Activated CD8-positive, alpha-beta T cell treated with anti-CD3 and anti-CD28 coated beads, Interleukin-2, amount 10 ng/mL, durations not matched to agents 7 days and 5 days (primary cell): ENCODE measurements at regions of chr2 and their contacts with region 1.

Region 1: DNA sequence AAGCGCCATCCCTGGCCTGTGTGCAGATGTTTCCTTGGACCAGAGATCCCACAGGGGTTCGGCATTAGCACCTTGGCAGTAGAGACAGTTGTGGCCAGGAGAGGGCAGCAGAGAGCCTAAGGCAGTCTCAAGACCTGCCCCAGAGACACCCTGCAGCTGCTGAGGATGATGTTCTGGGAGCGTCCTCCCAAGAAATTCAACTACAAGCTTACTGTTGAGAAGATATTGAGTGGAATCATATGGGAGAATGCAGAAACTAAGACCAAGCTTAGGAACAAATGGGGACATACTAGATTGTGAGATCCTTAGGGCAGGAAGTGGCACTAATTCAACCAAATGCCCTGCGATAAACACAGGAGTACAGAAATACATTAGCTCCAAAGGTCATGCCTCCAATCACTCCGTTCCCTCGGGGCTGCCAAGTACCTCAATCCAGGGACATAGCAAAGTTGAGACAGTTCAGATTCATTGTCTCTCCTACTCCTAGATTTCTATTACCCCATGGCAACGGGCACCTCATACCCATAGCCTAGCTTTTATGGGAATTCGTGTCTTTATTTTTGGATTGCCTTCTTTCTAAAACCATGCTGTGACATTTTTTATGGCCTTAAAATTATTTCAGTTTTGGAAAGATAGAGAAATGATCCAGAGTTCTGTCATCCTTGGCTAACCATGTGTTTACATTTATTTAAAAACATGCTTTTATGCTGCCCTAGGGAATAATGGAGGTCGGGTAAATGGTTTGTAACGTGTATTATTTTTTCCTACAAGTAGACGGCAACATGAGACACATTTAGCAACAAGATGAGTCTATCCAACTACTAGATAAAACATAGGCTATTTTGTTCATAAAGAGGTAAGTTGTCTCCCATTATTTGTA is 2.2 kb upstream of the ERMN start:
- DNase-seq: peak; percentile 91
- ATAC-seq: peak; percentile 96
- H3K4me3 Mint-ChIP-seq: peak overlapping the region; percentile 27
- H3K27ac Mint-ChIP-seq: peak overlapping the region; percentile 56
- H3K4me1 Mint-ChIP-seq: peaks cover 41% of the 10 kb centered on the region
- H3K27me3 Mint-ChIP-seq: no peaks in the 10 kb centered on the region

Region 2: GRCh38 chr2:157311706-157312105 is 16.2 kb before region 1 on chr2:
- CTCF ChIA-PET with region 1: interaction called, 442 read pairs
- POLR2A ChIA-PET with region 1: no interaction called
- DNase-seq: no peak
- ATAC-seq: no peak
- H3K4me3 Mint-ChIP-seq: no peak overlapping the region
- H3K27ac Mint-ChIP-seq: no peak overlapping the region
- H3K4me1 Mint-ChIP-seq: peaks cover 9% of the 10 kb centered on the region
- H3K27me3 Mint-ChIP-seq: peaks cover 2% of the 10 kb centered on the region

Region 3: DNA sequence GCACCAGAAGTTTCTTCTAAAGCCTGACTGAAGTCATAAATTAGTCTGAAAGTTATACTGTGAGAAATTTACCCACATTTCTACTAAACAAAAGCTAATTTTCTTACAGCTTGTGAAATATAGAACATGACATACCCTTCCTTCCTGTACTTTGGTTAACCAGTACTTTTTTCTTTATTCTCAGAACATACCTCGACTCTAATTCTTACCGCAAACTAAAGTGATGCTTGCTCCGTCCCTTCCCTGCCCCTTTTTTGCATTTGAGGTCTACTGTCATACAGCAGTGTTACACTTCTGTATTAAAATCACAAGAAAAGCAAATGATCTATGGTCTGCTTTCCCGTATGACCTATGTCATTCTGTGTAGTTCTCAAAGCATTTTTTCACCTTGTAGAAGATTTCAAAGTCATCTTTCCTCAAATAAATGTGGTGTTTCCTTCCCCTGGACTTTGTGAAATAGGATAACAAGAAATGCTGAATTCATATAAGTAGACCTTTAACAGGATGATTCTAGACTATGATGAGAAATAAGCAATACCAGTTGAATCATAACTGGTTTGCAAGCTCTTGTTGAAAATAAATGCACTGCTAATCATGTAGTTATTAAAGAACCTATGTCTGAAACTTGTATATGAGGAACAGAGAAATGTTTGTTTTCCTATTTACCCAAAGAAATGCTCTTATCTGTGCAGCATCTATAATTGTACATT is 85.6 kb after region 1 on chr2:
- CTCF ChIA-PET with region 1: interaction called, 66 read pairs
- POLR2A ChIA-PET with region 1: interaction called, 9 read pairs
- DNase-seq: peak; percentile 79
- ATAC-seq: peak; percentile 84
- H3K4me3 Mint-ChIP-seq: peak overlapping the region; percentile 60
- H3K27ac Mint-ChIP-seq: peak overlapping the region; percentile 86
- H3K4me1 Mint-ChIP-seq: peaks cover 83% of the 10 kb centered on the region
- H3K27me3 Mint-ChIP-seq: no peaks in the 10 kb centered on the region

Region 4: DNA sequence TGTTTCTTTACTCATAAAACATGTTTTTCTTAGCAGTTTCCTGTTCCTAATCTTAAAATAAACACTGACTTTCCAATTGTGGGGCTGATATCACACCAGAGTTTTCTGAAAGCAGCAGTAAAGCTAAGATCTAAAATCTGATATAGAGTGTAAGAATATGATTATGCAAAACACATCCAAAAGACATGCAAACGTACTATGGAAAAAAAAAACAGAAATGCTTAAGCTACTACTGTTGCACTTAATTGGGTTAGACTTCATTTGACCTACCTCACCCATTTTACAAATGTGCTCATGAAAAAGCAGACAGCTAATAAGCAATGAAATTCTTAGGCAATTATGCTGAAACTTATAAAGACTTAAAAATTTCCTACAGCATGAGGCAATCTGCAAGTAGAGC is 105.5 kb after region 1 on chr2:
- CTCF ChIA-PET with region 1: interaction called, 73 read pairs
- POLR2A ChIA-PET with region 1: interaction called, 12 read pairs
- DNase-seq: no peak
- ATAC-seq: peak; percentile 15
- H3K4me3 Mint-ChIP-seq: peak overlapping the region; percentile 94
- H3K27ac Mint-ChIP-seq: peak overlapping the region; percentile 86
- H3K4me1 Mint-ChIP-seq: peaks cover 77% of the 10 kb centered on the region
- H3K27me3 Mint-ChIP-seq: no peaks in the 10 kb centered on the region

Region 5: GRCh38 chr2:157468931-157469708 is 141.3 kb after region 1 on chr2:
- CTCF ChIA-PET with region 1: interaction called, 15 read pairs
- POLR2A ChIA-PET with region 1: interaction called, 3 read pairs
- DNase-seq: no peak
- ATAC-seq: peak; percentile 76
- H3K4me3 Mint-ChIP-seq: peak overlapping the region; percentile 72
- H3K27ac Mint-ChIP-seq: peak overlapping the region; percentile 99
- H3K4me1 Mint-ChIP-seq: peaks cover 96% of the 10 kb centered on the region
- H3K27me3 Mint-ChIP-seq: no peaks in the 10 kb centered on the region

Region 6: DNA sequence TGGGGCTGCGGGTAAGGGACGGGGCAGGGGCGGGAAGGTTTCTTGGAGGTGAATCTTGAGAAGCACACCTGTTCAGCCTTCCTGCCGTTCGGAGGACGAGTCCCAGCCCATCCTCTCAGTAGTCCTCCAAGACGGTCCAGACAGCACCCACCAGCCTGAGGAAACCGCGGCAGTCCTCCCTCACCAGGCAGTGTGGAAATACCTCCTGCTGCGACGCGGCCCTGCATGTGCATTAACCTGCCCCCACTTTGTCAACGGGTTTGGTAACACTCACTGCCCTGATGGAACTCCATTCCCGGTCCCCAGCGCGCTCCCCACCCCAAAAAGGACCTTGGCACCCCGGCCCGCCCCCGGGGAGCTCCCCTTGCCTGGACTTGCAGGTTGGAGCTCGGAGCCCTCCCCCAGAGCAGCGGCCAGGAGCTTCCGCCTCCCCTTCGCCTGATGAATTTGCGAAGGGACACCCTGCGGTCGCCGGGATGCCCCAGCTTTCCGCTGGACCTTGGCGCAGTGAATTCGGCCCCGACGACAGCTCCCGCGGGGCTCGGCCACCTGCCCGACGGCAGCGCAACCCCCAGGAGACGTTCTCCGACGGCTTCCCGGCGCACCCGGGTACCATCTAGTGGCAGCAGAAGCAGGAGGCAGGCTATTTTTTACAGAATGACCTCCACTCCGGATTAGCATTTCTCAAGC is 269.3 kb after region 1 on chr2:
- CTCF ChIA-PET with region 1: interaction called, 10 read pairs
- POLR2A ChIA-PET with region 1: no interaction called
- DNase-seq: peak; percentile 69
- ATAC-seq: peak; percentile 82
- H3K4me3 Mint-ChIP-seq: peak overlapping the region; percentile 62
- H3K27ac Mint-ChIP-seq: no peak overlapping the region
- H3K4me1 Mint-ChIP-seq: peaks cover 12% of the 10 kb centered on the region
- H3K27me3 Mint-ChIP-seq: peaks cover 18% of the 10 kb centered on the region

Region 7: DNA sequence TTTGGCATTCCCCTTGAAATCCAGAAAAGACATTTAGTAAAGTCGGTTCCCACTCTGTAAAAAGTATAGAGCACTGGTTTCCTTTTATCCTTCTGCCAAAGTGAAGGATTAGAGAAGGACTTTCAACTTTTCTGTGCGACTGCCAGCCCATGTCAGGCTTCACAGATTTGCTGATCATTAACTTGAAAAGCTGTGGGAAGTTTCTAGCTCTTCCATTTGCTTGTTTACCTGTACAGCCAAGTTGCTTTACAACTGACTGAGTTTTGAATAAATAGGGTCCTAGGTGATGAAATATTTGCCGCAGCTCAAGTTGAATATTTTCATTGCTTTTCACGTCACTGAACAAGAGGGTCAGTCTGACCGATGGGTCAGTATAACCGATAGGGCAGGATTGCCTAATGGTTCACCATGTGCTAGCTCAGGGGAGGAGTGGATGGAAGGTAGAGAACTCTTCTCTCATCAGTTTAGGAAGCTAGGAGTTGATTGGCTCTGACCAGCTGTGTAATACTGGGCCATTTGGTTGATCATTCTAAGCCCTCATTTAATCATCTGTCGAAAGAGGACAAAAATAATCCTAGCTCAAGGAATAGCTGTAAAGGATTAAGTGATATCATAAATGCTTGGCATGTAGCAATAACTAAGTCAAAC is 804.2 kb after region 1 on chr2:
- CTCF ChIA-PET with region 1: no interaction called
- POLR2A ChIA-PET with region 1: no interaction called
- DNase-seq: no peak
- ATAC-seq: no peak
- H3K4me3 Mint-ChIP-seq: no peak overlapping the region
- H3K27ac Mint-ChIP-seq: no peak overlapping the region
- H3K4me1 Mint-ChIP-seq: no peaks in the 10 kb centered on the region
- H3K27me3 Mint-ChIP-seq: peaks cover 2% of the 10 kb centered on the region